GM12878 (cell line): ENCODE measurements at regions of chr2 and their contacts with region 1.

Region 1: DNA sequence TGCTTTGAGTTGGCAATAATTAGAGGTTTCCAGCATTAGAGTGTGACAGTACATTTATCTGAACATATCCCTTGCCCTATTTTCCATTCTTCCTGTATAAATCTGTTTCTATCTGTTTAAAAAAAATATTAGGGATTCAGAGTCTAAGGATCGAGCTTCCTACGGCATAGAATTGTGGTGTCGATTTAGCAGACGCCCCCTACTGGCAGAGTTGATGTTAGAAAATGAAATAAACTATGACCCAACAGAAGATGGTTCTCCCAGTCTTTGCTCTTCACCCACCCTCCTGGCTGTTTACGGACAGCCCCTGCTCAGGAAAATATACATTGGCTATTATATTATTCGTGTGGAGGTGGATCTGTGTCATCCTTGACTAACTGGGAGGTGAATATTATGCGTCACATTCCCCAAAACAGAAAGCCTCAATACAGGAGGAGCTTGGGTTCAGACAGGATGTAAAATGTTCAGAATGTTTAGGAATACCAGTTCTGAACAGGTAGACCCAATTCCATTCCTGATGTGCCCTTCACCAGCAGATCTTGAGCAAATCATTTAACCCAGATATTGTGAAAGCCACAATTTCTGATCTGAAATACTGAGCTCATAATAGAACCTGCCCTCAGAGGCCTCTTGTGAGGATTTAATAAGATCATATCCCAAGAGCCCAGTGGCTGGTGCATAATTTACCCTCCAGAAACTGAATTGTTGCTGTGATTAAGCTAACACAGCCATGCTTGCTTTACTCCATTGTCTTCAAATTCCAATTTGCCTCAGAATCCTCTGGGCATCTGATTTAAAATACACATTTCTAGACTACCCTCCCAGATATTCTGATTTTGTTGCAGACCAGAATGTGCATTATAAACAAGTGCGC is 10.8 kb upstream of the ERMN start:
- DNase-seq: no peak
- ATAC-seq: peak; percentile 74; the same call in 2 of the 3 replicates
- H3K4me3 ChIP-seq: no peak overlapping the region
- H3K27ac ChIP-seq: no peak overlapping the region
- H3K4me1 ChIP-seq: no peaks in the 10 kb centered on the region
- H3K27me3 ChIP-seq: no peaks in the 10 kb centered on the region
- CTCF ChIP-seq: peak; percentile 39 to 69 (median 56)
- EP300 ChIP-seq: no peak
- POLR2A ChIP-seq: no peak
- RAD21 ChIP-seq: peak; percentile 39; the same call in 1 of the 2 replicates

Region 2: GRCh38 chr2:157312866-157313486 is 23.4 kb before region 1 on chr2:
- CTCF ChIA-PET with region 1: interaction called, 167 read pairs
- POLR2A ChIA-PET with region 1: no interaction called
- RAD21 ChIA-PET with region 1: interaction called, 126 read pairs
- SMC1A ChIA-PET with region 1: interaction called, 5 read pairs
- in situ Hi-C with region 1: no loop called
- intact Hi-C with region 1: no loop called
- DNase-seq: no peak
- ATAC-seq: peak; percentile 68
- H3K4me3 ChIP-seq: no peak overlapping the region
- H3K27ac ChIP-seq: no peak overlapping the region
- H3K4me1 ChIP-seq: no peaks in the 10 kb centered on the region
- H3K27me3 ChIP-seq: no peaks in the 10 kb centered on the region
- CTCF ChIP-seq: no peak
- EP300 ChIP-seq: no peak
- POLR2A ChIP-seq: no peak
- RAD21 ChIP-seq: no peak

Region 3: GRCh38 chr2:157355618-157356017 is 19.2 kb after region 1 on chr2:
- CTCF ChIA-PET with region 1: interaction called, 70 read pairs
- POLR2A ChIA-PET with region 1: interaction called, 3 read pairs
- RAD21 ChIA-PET with region 1: interaction called, 6 read pairs
- SMC1A ChIA-PET with region 1: interaction called, 5 read pairs
- in situ Hi-C with region 1: no loop called
- intact Hi-C with region 1: no loop called
- DNase-seq: no peak
- ATAC-seq: no peak
- H3K4me3 ChIP-seq: no peak overlapping the region
- H3K27ac ChIP-seq: no peak overlapping the region
- H3K4me1 ChIP-seq: no peaks in the 10 kb centered on the region
- H3K27me3 ChIP-seq: no peaks in the 10 kb centered on the region
- CTCF ChIP-seq: no peak
- EP300 ChIP-seq: no peak
- POLR2A ChIP-seq: no peak
- RAD21 ChIP-seq: no peak

Region 4: DNA sequence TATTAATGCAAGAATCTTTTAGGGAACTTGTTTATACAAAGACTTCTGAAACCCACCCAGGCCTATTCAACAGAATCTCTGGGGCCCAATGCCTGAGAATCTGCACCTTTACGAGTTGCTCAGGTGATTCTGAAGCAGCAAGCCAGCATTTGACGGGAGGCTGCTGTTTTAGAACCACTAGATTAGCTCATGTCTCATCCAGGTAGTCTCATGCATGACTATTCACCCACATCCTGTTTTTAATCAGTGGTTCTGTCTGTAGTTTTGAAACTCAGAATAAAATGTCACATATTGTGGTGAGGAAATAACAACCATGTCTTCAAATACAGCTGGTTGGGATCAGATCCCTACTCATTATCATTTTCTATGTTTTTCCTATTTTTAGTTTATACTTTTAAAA is 68.0 kb after region 1 on chr2:
- CTCF ChIA-PET with region 1: interaction called, 25 read pairs
- POLR2A ChIA-PET with region 1: no interaction called
- RAD21 ChIA-PET with region 1: interaction called, 12 read pairs
- SMC1A ChIA-PET with region 1: interaction called, 13 read pairs
- in situ Hi-C with region 1: no loop called
- intact Hi-C with region 1: no loop called
- DNase-seq: peak; percentile 85
- ATAC-seq: peak; percentile 99
- H3K4me3 ChIP-seq: no peak overlapping the region
- H3K27ac ChIP-seq: no peak overlapping the region; the same call in 1 of the 2 replicates
- H3K4me1 ChIP-seq: peaks cover 7% of the 10 kb centered on the region
- H3K27me3 ChIP-seq: no peaks in the 10 kb centered on the region
- CTCF ChIP-seq: no peak
- EP300 ChIP-seq: peak; percentile 87 to 92
- POLR2A ChIP-seq: no peak
- RAD21 ChIP-seq: 0 out of 2 replicates have a peak, but pooled peaks have one; percentile 17

Region 5: DNA sequence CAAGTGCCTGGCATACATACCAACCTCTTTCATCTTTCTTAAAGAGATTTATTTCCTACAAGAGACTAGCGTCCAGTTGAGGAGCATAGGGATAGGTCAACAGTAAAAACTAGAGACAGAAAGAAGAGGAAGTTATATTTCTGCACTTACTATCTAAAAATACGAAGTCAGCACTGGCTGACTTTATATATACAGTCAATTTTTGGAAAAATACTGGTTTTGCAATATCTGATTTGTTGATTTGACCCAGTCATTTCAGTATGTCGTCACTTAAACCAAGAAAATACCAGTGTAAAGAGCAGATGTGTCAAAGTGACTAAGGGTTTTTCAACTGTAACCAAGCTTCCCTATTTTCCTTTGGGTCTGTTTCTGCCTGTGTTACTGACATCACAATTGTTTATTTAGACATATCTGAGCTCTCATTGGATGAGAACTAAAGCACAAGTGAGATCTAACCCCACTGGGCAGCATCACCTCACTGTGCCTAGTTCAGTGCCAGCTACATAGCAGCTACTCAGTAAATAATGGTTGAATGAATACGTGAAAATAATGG is 84.5 kb after region 1 on chr2:
- CTCF ChIA-PET with region 1: interaction called, 13 read pairs
- POLR2A ChIA-PET with region 1: interaction called, 5 read pairs
- RAD21 ChIA-PET with region 1: no interaction called
- SMC1A ChIA-PET with region 1: interaction called, 4 read pairs
- in situ Hi-C with region 1: no loop called
- intact Hi-C with region 1: no loop called
- DNase-seq: no peak
- ATAC-seq: peak; percentile 74
- H3K4me3 ChIP-seq: no peak overlapping the region
- H3K27ac ChIP-seq: peak overlapping the region; percentile 60
- H3K4me1 ChIP-seq: peaks cover 34% of the 10 kb centered on the region
- H3K27me3 ChIP-seq: no peaks in the 10 kb centered on the region
- CTCF ChIP-seq: no peak
- EP300 ChIP-seq: peak in 1 of 2 experiments; percentile 73; a peak in 2 of 4 replicates
- POLR2A ChIP-seq: no peak
- RAD21 ChIP-seq: no peak

Region 6: DNA sequence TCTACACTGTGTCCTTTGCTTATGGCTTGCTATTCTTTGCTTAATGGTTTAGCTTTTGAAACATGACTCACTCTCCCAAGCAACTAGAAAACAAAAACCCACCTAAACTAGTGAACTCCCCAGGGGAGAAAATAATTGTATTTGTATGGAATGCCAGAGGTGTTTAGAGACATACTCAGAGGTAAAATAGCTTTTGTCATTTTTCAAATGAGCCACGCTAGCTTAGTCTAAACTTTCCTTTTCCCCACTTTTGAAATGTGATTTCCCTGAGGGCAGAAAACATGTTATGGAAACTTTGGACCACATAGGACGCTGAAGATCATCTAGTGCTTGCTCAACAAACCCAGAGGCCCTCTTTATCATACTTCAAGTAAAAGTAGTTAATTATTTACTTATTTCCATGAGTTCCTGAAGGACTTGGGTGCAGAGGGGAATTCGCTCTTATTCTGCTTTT is 124.0 kb after region 1 on chr2:
- CTCF ChIA-PET with region 1: interaction called, 44 read pairs
- POLR2A ChIA-PET with region 1: no interaction called
- RAD21 ChIA-PET with region 1: interaction called, 3 read pairs
- SMC1A ChIA-PET with region 1: interaction called, 8 read pairs
- in situ Hi-C with region 1: no loop called
- intact Hi-C with region 1: no loop called
- DNase-seq: no peak
- ATAC-seq: no peak
- H3K4me3 ChIP-seq: no peak overlapping the region
- H3K27ac ChIP-seq: no peak overlapping the region
- H3K4me1 ChIP-seq: no peaks in the 10 kb centered on the region
- H3K27me3 ChIP-seq: no peaks in the 10 kb centered on the region
- CTCF ChIP-seq: no peak
- EP300 ChIP-seq: no peak
- POLR2A ChIP-seq: no peak
- RAD21 ChIP-seq: no peak

Region 7: DNA sequence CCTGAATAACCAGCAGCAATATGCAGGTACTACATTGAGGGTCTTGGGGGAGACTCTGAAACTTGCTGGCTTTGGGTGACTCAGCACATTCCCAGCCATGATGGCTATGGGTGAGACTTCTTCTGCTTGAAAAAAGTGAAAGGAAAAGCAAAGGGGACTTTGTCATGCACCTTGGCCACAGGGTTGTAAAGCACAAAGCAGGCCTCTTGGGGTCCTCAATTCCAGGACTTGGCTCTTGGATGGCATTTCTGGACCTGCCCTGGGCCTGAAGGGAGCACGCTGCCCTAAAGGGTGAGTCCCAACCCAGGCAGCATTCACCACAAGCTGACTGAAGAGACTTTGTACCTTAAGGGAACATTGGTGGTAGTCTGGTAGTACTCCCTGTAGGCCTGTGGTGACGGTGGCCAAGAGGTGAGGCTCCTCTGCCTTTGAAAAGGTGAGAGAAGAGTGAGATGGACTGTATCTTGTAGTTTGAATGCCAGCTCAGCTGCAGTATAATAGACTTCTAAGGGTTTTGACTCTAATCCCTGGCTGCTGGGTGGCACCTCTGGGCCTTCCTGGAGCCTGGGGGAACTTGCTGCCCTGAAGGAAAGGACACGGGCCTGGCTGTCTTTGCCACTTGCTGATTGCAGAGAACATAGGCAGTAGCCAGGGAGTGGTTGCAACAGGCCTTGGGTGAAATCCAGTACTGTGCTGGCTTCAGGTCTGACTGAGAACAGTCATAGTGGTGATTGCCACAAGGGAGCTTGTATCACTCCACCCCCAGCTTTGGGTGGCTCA is 144.0 kb after region 1 on chr2:
- CTCF ChIA-PET with region 1: interaction called, 165 read pairs
- POLR2A ChIA-PET with region 1: no interaction called
- RAD21 ChIA-PET with region 1: no interaction called
- SMC1A ChIA-PET with region 1: interaction called, 165 read pairs
- in situ Hi-C with region 1: no loop called
- intact Hi-C with region 1: no loop called
- DNase-seq: no peak
- ATAC-seq: peak; percentile 87
- H3K4me3 ChIP-seq: no peak overlapping the region
- H3K27ac ChIP-seq: peak overlapping the region; percentile 44
- H3K4me1 ChIP-seq: peaks cover 25% of the 10 kb centered on the region
- H3K27me3 ChIP-seq: no peaks in the 10 kb centered on the region
- CTCF ChIP-seq: no peak
- EP300 ChIP-seq: peak in 1 of 2 experiments; percentile 26; a peak in 1 of 4 replicates
- POLR2A ChIP-seq: peak; percentile 35; the same call in 1 of the 2 replicates
- RAD21 ChIP-seq: no peak